Naive thymus-derived CD4-positive, alpha-beta T cell (primary cell): ENCODE measurements at regions of chr5 and their contacts with region 1.

Region 1: DNA sequence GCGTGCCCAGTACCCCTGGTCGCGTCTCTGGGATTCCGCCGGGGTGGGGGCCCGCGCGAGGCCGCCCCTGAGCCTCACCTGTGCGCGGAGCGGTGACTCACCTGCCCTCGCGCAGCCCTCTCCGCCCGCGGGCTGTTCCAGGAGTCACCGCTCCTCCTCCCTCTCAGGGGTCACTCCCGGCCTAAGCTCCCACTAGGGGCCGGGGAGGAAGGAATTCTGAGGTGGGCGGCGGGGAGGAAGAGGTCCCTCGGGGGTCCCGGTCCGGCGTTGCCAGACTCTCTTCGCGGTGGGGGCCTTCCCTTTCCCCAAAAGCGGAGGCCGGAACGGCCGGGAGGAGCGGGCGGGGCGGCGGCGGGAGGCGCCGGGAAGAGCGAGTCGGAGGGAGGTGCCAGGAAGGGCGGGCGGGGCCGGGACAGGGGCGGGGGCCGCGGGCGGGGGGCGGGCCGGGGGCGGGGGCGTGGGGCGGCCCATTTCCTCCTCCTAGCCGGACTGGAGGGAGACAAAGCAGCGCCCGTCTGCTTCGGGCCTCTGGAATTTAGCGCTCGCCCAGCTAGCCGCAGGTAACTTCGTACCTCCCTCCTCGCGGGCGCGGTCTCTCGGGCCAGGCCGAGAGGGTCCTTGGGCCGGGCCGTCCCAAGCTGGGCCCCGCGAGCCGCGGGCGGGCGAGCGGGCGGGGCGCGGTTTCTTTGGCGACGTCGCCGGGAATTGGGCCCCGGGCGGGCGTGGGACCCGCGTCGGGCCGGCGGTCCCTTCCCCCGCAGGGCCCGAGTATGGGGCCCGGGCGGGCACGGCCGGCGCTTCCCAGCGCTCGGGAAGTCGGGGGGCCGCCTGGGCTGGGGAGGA is at the start of gene CTNNA1:
- DNase-seq: peak in 4 of 9 donors; percentile 11 to 67 (median 16)
- ATAC-seq: peak; percentile 68
- H3K4me3 ChIP-seq: peak within 1 kb of the TSS; percentile 50
- H3K4me3 Mint-ChIP-seq: peak within 1 kb of the TSS; percentile 60 to 89 (median 79)
- H3K27ac ChIP-seq: no peak within 1 kb of the TSS
- H3K27ac Mint-ChIP-seq: peak within 1 kb of the TSS in 5 of 9 donors; percentile 10 to 67 (median 24)
- H3K4me1 ChIP-seq: peaks cover 6 to 7% of the 10 kb centered on the region in 2 donors
- H3K4me1 Mint-ChIP-seq: peaks cover 8 to 23% (median 15%) of the 10 kb centered on the region in 7 donors
- H3K27me3 ChIP-seq: no peaks in the 10 kb centered on the region
- H3K27me3 Mint-ChIP-seq: peaks cover 42 to 51% (median 48%) of the 10 kb centered on the region in 5 donors
- total RNA-seq, gene CTNNA1: 3.7 to 52.9 (median 7.1) TPM

Region 2: GRCh38 chr5:138011991-138012390 is 741.2 kb before region 1 on chr5:
- CTCF ChIA-PET with region 1: no interaction called
- POLR2A ChIA-PET with region 1: no interaction called
- intact Hi-C with region 1: no loop called
- DNase-seq: no peak
- ATAC-seq: no peak
- H3K4me3 ChIP-seq: no peak overlapping the region
- H3K4me3 Mint-ChIP-seq: no peak overlapping the region
- H3K27ac ChIP-seq: no peak overlapping the region
- H3K27ac Mint-ChIP-seq: no peak overlapping the region
- H3K4me1 ChIP-seq: no peaks in the 10 kb centered on the region
- H3K4me1 Mint-ChIP-seq: peaks cover 5 to 24% (median 15%) of the 10 kb centered on the region in 7 donors
- H3K27me3 ChIP-seq: no peaks in the 10 kb centered on the region
- H3K27me3 Mint-ChIP-seq: no peaks in the 10 kb centered on the region

Region 3: GRCh38 chr5:138654281-138654867 is 98.8 kb before region 1 on chr5:
- CTCF ChIA-PET with region 1: no interaction called
- POLR2A ChIA-PET with region 1: no interaction called
- intact Hi-C with region 1: loop called (anchors 2 to 10 kb)
- DNase-seq: peak in 8 of 9 donors; percentile 63 to 84 (median 80)
- ATAC-seq: peak; percentile 88
- H3K4me3 ChIP-seq: no peak overlapping the region
- H3K4me3 Mint-ChIP-seq: peak overlapping the region; percentile 4 to 72 (median 36)
- H3K27ac ChIP-seq: no peak overlapping the region
- H3K27ac Mint-ChIP-seq: peak overlapping the region in 8 of 9 donors; percentile 44 to 93 (median 80)
- H3K4me1 ChIP-seq: peaks cover 15 to 26% of the 10 kb centered on the region in 2 donors
- H3K4me1 Mint-ChIP-seq: peaks cover 17 to 34% (median 27%) of the 10 kb centered on the region in 7 donors
- H3K27me3 ChIP-seq: peaks cover 0 to 36% of the 10 kb centered on the region in 2 donors
- H3K27me3 Mint-ChIP-seq: peaks cover 80 to 92% (median 86%) of the 10 kb centered on the region in 5 donors

Region 4: GRCh38 chr5:138737494-138738265 is 15.5 kb before region 1 on chr5:
- CTCF ChIA-PET with region 1: no interaction called
- POLR2A ChIA-PET with region 1: no interaction called
- intact Hi-C with region 1: loop called in 1 of 2 experiments (anchors 1 kb)
- DNase-seq: no peak
- ATAC-seq: no peak
- H3K4me3 ChIP-seq: no peak overlapping the region
- H3K4me3 Mint-ChIP-seq: no peak overlapping the region
- H3K27ac ChIP-seq: no peak overlapping the region
- H3K27ac Mint-ChIP-seq: no peak overlapping the region
- H3K4me1 ChIP-seq: peaks cover 0 to 3% of the 10 kb centered on the region in 2 donors
- H3K4me1 Mint-ChIP-seq: peaks cover 4 to 19% (median 11%) of the 10 kb centered on the region in 7 donors
- H3K27me3 ChIP-seq: peaks cover 0 to 5% of the 10 kb centered on the region in 2 donors
- H3K27me3 Mint-ChIP-seq: peaks cover 8 to 38% (median 27%) of the 10 kb centered on the region in 5 donors